PC-3 (cell line): ENCODE measurements at regions of chr12 and their contacts with region 1.

Region 1: GRCh38 chr12:89709157-89709994 is 738 bp upstream of the ATP2B1 start:
- DNase-seq: peak; percentile 96
- ATAC-seq: peak; percentile 70
- H3K4me3 ChIP-seq: peak overlapping the region; percentile 90
- H3K27ac ChIP-seq: peak overlapping the region; percentile 87
- H3K4me1 ChIP-seq: peaks cover 39% of the 10 kb centered on the region
- H3K27me3 ChIP-seq: no peaks in the 10 kb centered on the region
- CTCF ChIP-seq: no peak

Region 2: GRCh38 chr12:88960213-88960878 is 749.0 kb before region 1 on chr12:
- CTCF ChIA-PET with region 1: no interaction called
- POLR2A ChIA-PET with region 1: no interaction called
- intact Hi-C with region 1: no loop called
- DNase-seq: peak; percentile 48
- ATAC-seq: peak; percentile 86
- H3K4me3 ChIP-seq: no peak overlapping the region
- H3K27ac ChIP-seq: no peak overlapping the region
- H3K4me1 ChIP-seq: peaks cover 9% of the 10 kb centered on the region; the same call in 1 of the 2 replicates
- H3K27me3 ChIP-seq: no peaks in the 10 kb centered on the region
- CTCF ChIP-seq: no peak

Region 3: DNA sequence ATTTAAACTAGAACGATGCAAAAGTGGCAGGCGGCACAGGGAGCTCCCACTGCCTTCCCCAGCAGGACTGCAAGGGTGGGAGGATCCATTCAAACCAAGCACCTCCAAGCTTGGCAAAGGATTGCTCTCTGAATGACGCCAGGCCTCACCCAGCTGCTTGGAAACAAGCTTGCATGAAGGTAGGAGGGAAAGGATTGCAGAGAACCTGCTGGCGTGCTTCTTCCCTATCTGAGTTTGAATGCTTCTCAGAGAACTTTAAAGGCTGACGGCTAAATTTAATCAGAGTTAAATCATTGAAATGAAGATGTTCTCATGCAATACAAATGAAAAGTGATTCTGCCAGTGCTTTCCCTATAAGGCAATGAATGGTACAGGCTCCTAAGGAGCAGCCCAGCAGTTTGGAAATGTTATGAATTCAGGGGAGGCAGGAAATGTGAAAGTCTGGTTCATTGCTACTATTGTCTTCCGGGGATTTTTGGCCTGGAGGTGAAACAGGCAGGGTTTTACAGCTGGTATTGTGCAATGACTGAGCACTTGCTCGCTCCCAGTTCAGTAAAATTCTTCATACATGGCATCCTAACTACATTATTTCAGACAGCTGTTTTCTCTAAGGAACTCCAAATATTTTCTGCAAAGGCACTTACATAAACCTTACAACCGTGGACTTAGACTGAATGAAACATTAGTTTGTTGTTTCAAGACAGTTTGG is 325.2 kb before region 1 on chr12:
- CTCF ChIA-PET with region 1: no interaction called
- POLR2A ChIA-PET with region 1: no interaction called
- intact Hi-C with region 1: no loop called
- DNase-seq: peak; percentile 75
- ATAC-seq: peak; percentile 91
- H3K4me3 ChIP-seq: peak overlapping the region; percentile 21; the same call in 1 of the 2 replicates
- H3K27ac ChIP-seq: peak overlapping the region; percentile 56
- H3K4me1 ChIP-seq: peaks cover 30% of the 10 kb centered on the region
- H3K27me3 ChIP-seq: no peaks in the 10 kb centered on the region
- CTCF ChIP-seq: no peak

Region 4: GRCh38 chr12:89566630-89567151 is 142.7 kb before region 1 on chr12:
- CTCF ChIA-PET with region 1: no interaction called
- POLR2A ChIA-PET with region 1: no interaction called
- intact Hi-C with region 1: no loop called
- DNase-seq: no peak
- ATAC-seq: no peak
- H3K4me3 ChIP-seq: no peak overlapping the region
- H3K27ac ChIP-seq: no peak overlapping the region
- H3K4me1 ChIP-seq: no peaks in the 10 kb centered on the region
- H3K27me3 ChIP-seq: no peaks in the 10 kb centered on the region
- CTCF ChIP-seq: no peak

Region 5: GRCh38 chr12:89636052-89636775 is 73.2 kb before region 1 on chr12:
- CTCF ChIA-PET with region 1: no interaction called
- POLR2A ChIA-PET with region 1: interaction called, 8 read pairs
- intact Hi-C with region 1: loop called (anchors 2 kb)
- DNase-seq: peak; percentile 77
- ATAC-seq: peak; percentile 68
- H3K4me3 ChIP-seq: peak overlapping the region; percentile 2; the same call in 1 of the 2 replicates
- H3K27ac ChIP-seq: peak overlapping the region; percentile 72
- H3K4me1 ChIP-seq: peaks cover 49% of the 10 kb centered on the region
- H3K27me3 ChIP-seq: no peaks in the 10 kb centered on the region
- CTCF ChIP-seq: no peak

Region 6: DNA sequence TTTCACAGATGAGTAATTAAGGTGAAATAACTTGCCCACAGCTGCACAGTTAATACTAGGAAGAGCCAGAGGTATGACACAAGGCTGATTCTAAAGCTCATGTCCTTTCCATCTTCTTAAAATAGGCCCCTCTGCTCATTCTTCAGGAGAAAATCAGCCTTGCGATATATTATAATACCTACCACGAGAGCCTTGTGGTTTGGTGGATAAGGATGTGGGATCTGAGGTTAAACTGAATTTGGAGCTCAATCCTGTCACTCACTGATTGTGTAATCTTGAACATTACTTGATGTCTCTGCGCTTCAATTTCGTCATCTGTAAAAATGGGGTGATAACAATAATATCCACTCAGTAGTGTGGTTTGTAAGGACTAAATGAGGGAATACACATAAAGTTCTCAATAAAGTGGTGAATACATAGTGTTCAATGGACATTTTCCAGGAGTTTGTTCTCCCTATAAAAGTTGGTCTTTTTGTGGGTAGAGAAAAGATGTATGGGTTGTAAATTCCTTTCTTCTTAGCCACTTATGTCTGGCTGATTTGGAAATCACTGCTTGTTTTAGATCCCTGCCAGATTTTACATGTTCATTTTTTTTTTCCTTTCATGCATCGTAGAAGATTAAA is 24.3 kb after region 1 on chr12:
- CTCF ChIA-PET with region 1: no interaction called
- POLR2A ChIA-PET with region 1: interaction called, 8 read pairs
- intact Hi-C with region 1: loop called (anchors 1 kb)
- DNase-seq: peak; percentile 93
- ATAC-seq: peak; percentile 74
- H3K4me3 ChIP-seq: peak overlapping the region; percentile 0; the same call in 1 of the 2 replicates
- H3K27ac ChIP-seq: peak overlapping the region; percentile 89
- H3K4me1 ChIP-seq: peaks cover 38% of the 10 kb centered on the region
- H3K27me3 ChIP-seq: no peaks in the 10 kb centered on the region
- CTCF ChIP-seq: no peak

Region 7: DNA sequence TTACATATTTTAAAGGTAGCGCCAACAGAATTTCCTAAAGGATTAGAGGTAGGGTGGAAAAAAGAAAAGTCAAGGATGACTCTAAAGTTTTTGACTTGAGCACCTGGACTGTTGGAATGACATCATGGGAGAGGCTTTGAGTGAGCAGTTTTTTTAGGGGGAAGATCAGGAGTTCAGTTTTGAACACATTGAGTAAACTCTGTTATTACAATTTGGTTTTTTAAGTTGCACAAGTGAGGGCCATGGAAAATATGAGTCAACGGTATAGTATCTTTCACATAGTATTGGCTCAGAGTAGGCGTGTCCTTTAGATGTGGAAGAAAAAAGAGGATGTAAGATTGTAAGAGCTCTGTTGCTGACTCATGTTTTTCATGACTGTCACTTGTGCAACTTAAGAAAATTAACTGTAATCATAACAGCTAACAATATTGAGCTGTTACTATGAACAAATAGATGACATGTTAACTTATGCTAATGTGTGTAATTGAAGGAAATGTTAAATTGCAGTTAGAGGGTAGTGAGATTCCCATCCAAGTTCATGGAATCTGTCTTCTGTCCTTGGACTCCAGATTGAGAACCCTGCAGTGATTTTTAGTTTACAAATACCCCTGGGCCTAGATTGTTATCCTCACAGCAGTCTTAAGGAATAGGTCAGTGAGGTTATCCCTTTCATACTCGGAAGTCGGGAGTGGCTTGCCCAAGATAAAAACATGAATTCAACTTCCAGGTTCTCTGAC is 47.4 kb after region 1 on chr12:
- CTCF ChIA-PET with region 1: interaction called, 3 read pairs
- POLR2A ChIA-PET with region 1: no interaction called
- intact Hi-C with region 1: loop called (anchors 2 kb)
- DNase-seq: peak; percentile 98
- ATAC-seq: peak; percentile 88
- H3K4me3 ChIP-seq: no peak overlapping the region; the same call in 1 of the 2 replicates
- H3K27ac ChIP-seq: peak overlapping the region; percentile 94
- H3K4me1 ChIP-seq: peaks cover 42% of the 10 kb centered on the region
- H3K27me3 ChIP-seq: no peaks in the 10 kb centered on the region
- CTCF ChIP-seq: no peak

Region 8: GRCh38 chr12:89817501-89818226 is 108.3 kb after region 1 on chr12:
- CTCF ChIA-PET with region 1: no interaction called
- POLR2A ChIA-PET with region 1: no interaction called
- intact Hi-C with region 1: loop called (anchors 1 kb)
- DNase-seq: peak; percentile 74
- ATAC-seq: peak; percentile 84
- H3K4me3 ChIP-seq: no peak overlapping the region
- H3K27ac ChIP-seq: peak overlapping the region; percentile 81
- H3K4me1 ChIP-seq: peaks cover 33% of the 10 kb centered on the region
- H3K27me3 ChIP-seq: no peaks in the 10 kb centered on the region
- CTCF ChIP-seq: no peak